CD4-positive, alpha-beta memory T cell (primary cell): ENCODE measurements at regions of chr6 and their contacts with region 1.

Region 1: DNA sequence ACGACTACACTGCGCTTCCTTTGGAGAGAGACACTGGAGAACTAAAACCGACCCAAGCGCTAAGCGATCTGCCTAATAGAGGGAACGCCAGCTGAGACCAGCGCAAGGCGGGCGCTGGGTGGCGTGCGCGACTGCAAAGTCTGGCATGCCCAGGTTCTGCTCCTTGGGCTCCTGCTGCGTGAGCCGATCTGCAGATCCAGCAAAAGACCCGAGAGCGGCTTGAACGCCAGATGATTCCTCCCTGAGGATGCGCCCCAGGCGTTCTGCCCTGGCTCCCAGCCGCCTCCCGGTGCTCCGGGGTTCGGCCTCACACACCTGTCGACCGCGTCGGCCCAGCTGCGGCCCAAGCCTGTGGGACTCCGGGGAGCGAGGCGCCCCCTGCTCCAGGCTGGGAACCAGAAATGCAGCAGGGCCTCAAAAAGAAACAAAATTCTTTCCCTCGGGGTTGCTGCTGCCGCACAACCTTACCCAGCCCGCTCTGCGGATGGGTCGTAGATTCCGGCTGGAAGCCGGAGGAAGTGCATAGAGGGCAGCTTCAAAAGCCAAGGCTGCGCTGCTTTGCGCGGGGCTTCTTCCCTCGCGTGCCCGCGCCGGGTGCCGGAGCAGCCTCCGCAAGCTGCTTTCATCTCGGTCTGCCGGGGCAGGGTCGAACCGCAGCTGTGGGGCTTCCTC is 17.9 kb upstream of the PRDM13 start:
- DNase-seq: peak; percentile 59 to 65 (median 61)
- H3K4me3 ChIP-seq: peak overlapping the region; percentile 42 to 66
- H3K4me3 Mint-ChIP-seq: peak overlapping the region; percentile 87 to 94 (median 90)
- H3K27ac ChIP-seq: no peak overlapping the region
- H3K27ac Mint-ChIP-seq: peak overlapping the region in 2 of 7 donors; percentile 43 to 79
- H3K4me1 ChIP-seq: peaks cover 37% of the 10 kb centered on the region
- H3K4me1 Mint-ChIP-seq: peaks cover 20 to 45% (median 28%) of the 10 kb centered on the region in 4 donors
- H3K27me3 ChIP-seq: peaks cover 36% of the 10 kb centered on the region
- H3K27me3 Mint-ChIP-seq: peaks cover 39 to 40% of the 10 kb centered on the region in 2 donors

Region 2: GRCh38 chr6:99520855-99521632 is 67.7 kb before region 1 on chr6:
- CTCF ChIA-PET with region 1: interaction called, 3 read pairs
- POLR2A ChIA-PET with region 1: no interaction called
- intact Hi-C with region 1: loop called (anchors 2 kb)
- DNase-seq: peak; percentile 66 to 79 (median 71)
- H3K4me3 ChIP-seq: peak overlapping the region; percentile 87 to 99
- H3K4me3 Mint-ChIP-seq: peak overlapping the region; percentile 92 to 99 (median 98)
- H3K27ac ChIP-seq: peak overlapping the region; percentile 64
- H3K27ac Mint-ChIP-seq: peak overlapping the region; percentile 67 to 97 (median 96)
- H3K4me1 ChIP-seq: peaks cover 23% of the 10 kb centered on the region
- H3K4me1 Mint-ChIP-seq: peaks cover 8 to 31% (median 24%) of the 10 kb centered on the region in 4 donors
- H3K27me3 ChIP-seq: no peaks in the 10 kb centered on the region
- H3K27me3 Mint-ChIP-seq: no peaks in the 10 kb centered on the region

Region 3: DNA sequence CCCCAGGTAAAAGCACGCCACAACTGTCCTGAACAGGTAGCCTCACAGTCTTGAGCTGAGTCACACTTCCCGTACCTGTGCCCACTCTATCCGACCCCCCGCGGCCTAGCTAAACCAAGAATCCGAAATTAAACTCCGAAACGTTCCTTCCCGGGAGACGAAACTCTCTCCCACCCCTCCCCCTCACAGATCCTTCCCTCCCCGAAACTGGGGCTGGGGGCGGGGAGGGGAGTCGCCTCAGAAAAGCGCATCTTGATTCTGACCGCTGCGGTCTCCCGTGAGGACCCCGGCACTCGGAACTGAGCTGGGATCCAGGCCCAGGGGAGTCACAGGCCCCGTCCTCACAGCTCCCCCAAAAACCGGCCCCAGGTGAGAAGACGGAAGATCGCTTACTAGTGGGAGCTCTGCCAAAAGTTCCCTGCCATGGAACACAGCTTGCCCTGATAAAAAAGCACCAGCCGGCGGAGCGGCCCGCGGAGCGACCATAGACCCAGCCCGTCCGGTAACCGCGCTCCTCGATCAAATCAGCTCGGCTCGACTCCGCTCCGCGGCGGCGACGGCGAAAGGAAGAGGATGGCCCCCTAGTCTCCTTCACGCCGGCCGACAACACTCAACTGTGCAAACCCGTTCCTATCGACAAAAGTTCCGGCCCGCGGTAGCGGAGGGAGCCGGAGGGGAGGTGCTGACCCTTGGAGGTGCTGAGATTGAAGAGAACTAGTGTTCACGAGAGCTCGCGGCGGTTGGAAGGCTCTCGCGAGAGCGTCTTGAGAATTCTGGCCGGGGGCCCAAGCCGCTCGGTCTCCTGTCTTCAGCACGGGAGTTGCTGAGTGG is 20.4 kb before region 1 on chr6 and contains the start of gene CCNC:
- CTCF ChIA-PET with region 1: interaction called, 13 read pairs
- POLR2A ChIA-PET with region 1: interaction called, 10 read pairs
- intact Hi-C with region 1: no loop called
- DNase-seq: peak; percentile 87 to 89 (median 88)
- H3K4me3 ChIP-seq: peak within 1 kb of the TSS; percentile 79 to 86
- H3K4me3 Mint-ChIP-seq: peak within 1 kb of the TSS; percentile 93 to 100 (median 99)
- H3K27ac ChIP-seq: peak within 1 kb of the TSS; percentile 78
- H3K27ac Mint-ChIP-seq: peak within 1 kb of the TSS; percentile 88 to 98 (median 95)
- H3K4me1 ChIP-seq: peaks cover 24% of the 10 kb centered on the region
- H3K4me1 Mint-ChIP-seq: peaks cover 25 to 53% (median 31%) of the 10 kb centered on the region in 4 donors
- H3K27me3 ChIP-seq: no peaks in the 10 kb centered on the region
- H3K27me3 Mint-ChIP-seq: no peaks in the 10 kb centered on the region
- total RNA-seq, gene CCNC: 41.3 to 42.7 TPM

Region 4: DNA sequence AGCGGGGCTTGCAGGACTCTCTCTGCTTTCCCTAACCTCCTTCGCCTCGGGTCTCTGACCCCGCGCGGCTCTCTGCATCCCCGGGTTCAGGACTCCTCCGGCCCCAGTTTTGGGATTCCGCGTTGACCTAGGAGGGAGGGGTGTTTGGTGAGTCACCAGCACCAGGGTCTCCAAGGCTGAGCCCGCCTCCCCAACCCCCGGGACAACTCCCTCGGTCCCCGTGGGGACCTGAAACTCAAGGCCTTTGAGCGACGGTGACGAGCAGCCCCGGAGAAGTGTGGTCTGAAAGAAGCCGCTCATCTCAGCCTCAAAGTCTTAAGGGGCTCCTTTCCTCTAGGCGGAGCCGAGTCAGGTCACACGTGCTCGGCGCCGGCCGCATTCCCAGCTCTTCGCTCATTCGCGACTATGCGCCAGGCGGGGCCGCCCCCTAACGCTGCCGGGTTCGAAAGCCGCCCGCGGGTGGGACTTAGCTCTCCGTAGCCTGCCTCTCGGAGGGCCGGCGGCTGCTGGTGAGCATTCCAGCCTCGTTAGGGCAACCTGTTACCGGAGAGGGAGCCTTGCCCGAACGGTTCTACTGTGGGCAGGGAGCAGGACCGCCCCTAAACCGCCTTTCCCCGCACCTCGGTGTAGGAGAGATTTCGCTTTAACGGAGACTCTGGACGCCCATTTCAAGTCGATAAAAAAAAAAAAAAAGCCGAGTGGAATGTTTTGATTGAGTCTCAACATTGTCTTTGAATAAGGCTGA is 14.8 kb after region 1 on chr6:
- CTCF ChIA-PET with region 1: interaction called, 17 read pairs
- POLR2A ChIA-PET with region 1: interaction called, 6 read pairs
- intact Hi-C with region 1: loop called (anchors 1 kb)
- DNase-seq: no peak
- H3K4me3 ChIP-seq: peak overlapping the region in 1 of 2 donors; percentile 30
- H3K4me3 Mint-ChIP-seq: peak overlapping the region; percentile 11 to 76 (median 67)
- H3K27ac ChIP-seq: no peak overlapping the region
- H3K27ac Mint-ChIP-seq: peak overlapping the region in 3 of 7 donors; percentile 22 to 65 (median 29)
- H3K4me1 ChIP-seq: peaks cover 42% of the 10 kb centered on the region
- H3K4me1 Mint-ChIP-seq: peaks cover 10 to 52% (median 31%) of the 10 kb centered on the region in 4 donors
- H3K27me3 ChIP-seq: peaks cover 73% of the 10 kb centered on the region
- H3K27me3 Mint-ChIP-seq: peaks cover 69 to 73% of the 10 kb centered on the region in 2 donors

Region 5: GRCh38 chr6:99613409-99613704 is 24.6 kb after region 1 on chr6:
- CTCF ChIA-PET with region 1: interaction called, 17 read pairs
- POLR2A ChIA-PET with region 1: interaction called, 12 read pairs
- intact Hi-C with region 1: no loop called
- DNase-seq: no peak
- H3K4me3 ChIP-seq: no peak overlapping the region
- H3K4me3 Mint-ChIP-seq: peak overlapping the region in 3 of 8 donors; percentile 35 to 80 (median 63)
- H3K27ac ChIP-seq: no peak overlapping the region
- H3K27ac Mint-ChIP-seq: no peak overlapping the region
- H3K4me1 ChIP-seq: peaks cover 31% of the 10 kb centered on the region
- H3K4me1 Mint-ChIP-seq: peaks cover 9 to 42% (median 21%) of the 10 kb centered on the region in 4 donors
- H3K27me3 ChIP-seq: peaks cover 90% of the 10 kb centered on the region
- H3K27me3 Mint-ChIP-seq: peaks cover 61 to 70% of the 10 kb centered on the region in 2 donors

Region 6: GRCh38 chr6:99746261-99746895 is 157.6 kb after region 1 on chr6:
- CTCF ChIA-PET with region 1: interaction called, 37 read pairs
- POLR2A ChIA-PET with region 1: interaction called, 4 read pairs
- intact Hi-C with region 1: loop called (anchors 1 kb)
- DNase-seq: peak; percentile 57 to 64 (median 62)
- H3K4me3 ChIP-seq: no peak overlapping the region
- H3K4me3 Mint-ChIP-seq: no peak overlapping the region
- H3K27ac ChIP-seq: no peak overlapping the region
- H3K27ac Mint-ChIP-seq: no peak overlapping the region
- H3K4me1 ChIP-seq: no peaks in the 10 kb centered on the region
- H3K4me1 Mint-ChIP-seq: no peaks in the 10 kb centered on the region
- H3K27me3 ChIP-seq: peaks cover 3% of the 10 kb centered on the region
- H3K27me3 Mint-ChIP-seq: peaks cover 5 to 20% of the 10 kb centered on the region in 2 donors

Region 7: DNA sequence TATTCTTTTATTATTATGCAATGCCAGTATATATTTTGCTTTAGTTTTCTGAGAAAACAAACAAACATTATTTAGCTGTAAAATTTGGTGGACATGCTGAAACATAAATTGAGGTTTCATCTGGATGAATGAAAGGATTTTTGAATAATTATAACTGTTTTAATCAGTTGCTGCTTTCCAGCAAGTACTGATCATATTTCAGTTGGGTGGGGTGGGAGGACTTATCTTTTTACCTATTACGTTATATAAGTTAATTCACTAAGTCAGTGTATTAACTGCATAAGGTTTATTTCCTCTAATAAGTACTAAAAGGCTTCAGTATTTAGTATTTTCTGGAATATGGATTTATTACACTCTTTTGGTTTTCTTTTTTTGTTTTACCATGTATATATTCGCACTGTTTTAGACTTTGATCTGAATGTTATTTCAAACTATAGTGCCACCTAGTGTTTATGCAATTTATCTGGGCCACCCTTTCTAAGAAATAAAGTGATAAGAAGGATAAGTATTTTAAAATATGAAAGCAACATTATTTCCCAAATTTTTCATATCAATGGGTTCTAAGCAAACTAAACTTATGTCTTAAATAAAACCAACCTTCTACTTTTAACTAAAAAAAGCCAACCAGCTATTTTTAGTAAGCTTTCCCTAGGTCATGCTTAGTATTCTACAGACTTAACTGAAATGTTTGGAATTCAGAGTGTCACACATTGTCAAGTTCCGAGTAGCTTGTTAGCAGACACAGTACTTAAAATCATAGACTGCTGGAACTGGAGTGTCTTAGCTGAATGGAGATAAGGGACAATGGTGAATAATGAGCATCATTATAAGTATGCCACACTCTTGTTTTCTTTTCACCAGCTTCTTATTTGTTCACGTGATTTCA is 510.7 kb after region 1 on chr6:
- CTCF ChIA-PET with region 1: no interaction called
- POLR2A ChIA-PET with region 1: no interaction called
- intact Hi-C with region 1: loop called (anchors 2 kb)
- DNase-seq: peak in 1 of 5 donors; percentile 9
- H3K4me3 ChIP-seq: no peak overlapping the region
- H3K4me3 Mint-ChIP-seq: no peak overlapping the region
- H3K27ac ChIP-seq: no peak overlapping the region
- H3K27ac Mint-ChIP-seq: no peak overlapping the region
- H3K4me1 ChIP-seq: no peaks in the 10 kb centered on the region
- H3K4me1 Mint-ChIP-seq: no peaks in the 10 kb centered on the region
- H3K27me3 ChIP-seq: no peaks in the 10 kb centered on the region
- H3K27me3 Mint-ChIP-seq: peaks cover 7% of the 10 kb centered on the region in 2 donors